Left cardiac atrium (tissue), 4 donors: ENCODE measurements at regions of chr6 and their contacts with region 1.

Region 1: GRCh38 chr6:153059761-153060160 is 57.3 kb upstream of the MTRF1L start:
- DNase-seq: no peak
- ATAC-seq: no peak

Region 2: DNA sequence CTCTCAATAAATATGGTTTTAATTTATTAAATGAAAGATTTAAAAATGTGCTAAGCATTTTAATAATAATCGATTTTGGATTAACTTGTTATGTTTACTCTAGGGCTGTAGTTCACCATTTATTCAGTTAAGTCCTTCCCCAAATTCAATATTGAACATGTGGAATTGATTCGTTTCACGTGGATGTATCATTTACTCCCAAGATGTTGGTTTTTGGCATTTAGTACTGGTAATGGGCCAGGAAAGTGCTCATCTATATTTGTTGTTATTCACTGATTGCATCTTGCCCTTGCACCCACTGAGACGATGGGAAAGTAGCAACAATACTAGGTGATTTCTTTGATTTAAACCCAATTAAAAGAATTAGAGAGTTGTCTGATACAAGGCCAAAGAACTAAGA is 1155.1 kb before region 1 on chr6:
- intact Hi-C with region 1: no loop called
- DNase-seq: no peak
- ATAC-seq: no peak

Region 3: DNA sequence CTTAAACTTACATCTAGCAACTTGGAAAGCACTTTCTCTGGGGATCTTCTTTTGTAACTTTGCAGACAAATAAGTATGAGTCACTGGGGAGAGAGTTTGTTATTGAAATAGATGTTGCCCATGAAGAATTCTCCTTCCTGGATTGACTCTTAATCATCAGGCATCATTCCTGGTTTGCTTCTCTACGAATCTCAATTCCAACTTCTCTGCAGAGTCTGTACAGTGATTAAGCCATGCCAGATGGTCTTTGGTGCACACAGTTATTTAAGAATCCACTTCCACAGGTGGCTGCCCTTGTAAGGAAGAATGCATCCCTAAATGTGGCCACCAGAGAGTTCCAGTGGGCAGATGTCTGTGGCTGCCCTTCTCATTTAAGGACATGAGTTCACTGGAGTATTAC is 336.4 kb before region 1 on chr6:
- intact Hi-C with region 1: no loop called
- DNase-seq: no peak
- ATAC-seq: no peak

Region 4: DNA sequence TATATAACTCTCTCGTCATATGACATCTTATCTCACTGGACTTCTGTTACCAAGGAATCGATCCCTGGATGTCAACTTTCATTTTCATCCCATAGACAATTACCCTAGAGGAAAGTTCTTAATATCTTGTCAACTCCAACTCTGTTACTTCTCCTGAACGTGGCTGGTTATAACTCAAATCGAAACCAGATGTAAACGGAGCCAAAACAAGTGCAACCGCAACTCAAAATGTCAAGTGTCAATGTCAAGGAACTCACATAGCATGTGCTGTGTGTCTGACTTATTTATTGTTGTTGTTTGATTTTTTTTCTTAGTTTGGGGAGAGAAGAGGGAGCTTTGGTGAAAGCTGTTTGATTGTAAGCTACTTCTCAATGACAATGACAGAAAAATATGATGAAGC is 200.5 kb before region 1 on chr6:
- intact Hi-C with region 1: no loop called
- DNase-seq: no peak
- ATAC-seq: no peak

Region 5: GRCh38 chr6:152982768-152983636 is 76.8 kb before region 1 on chr6 and contains the start of gene FBXO5:
- intact Hi-C with region 1: no loop called
- DNase-seq: peak; percentile 98
- ATAC-seq: peak; percentile 97
- total RNA-seq, gene FBXO5: 2.7 to 3.1 TPM

Region 6: DNA sequence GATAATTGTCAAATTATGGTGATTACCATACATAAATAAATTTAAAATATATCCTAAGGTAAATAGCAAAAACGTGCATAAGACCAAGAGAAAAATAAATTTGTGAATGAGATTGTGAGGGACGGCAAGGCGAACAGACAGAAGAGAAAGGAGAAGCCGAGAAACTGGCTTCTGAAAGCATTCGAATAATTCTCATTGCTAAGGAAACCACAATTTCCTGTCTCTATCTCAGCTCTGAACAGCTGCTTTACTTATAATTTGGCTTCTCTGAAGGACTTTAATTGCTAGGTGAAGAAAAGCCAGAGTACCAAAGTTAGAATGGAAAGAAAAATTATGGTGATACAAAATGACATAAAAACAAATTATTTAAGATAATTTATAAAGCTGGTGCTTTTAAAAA is 150.3 kb after region 1 on chr6:
- intact Hi-C with region 1: loop called in 1 of 2 experiments (anchors 10 kb)
- DNase-seq: no peak
- ATAC-seq: peak in 1 of 2 donors; percentile 35